ENCODE measurements at regions of chr12 and their contacts with region 1.

Region 1: DNA sequence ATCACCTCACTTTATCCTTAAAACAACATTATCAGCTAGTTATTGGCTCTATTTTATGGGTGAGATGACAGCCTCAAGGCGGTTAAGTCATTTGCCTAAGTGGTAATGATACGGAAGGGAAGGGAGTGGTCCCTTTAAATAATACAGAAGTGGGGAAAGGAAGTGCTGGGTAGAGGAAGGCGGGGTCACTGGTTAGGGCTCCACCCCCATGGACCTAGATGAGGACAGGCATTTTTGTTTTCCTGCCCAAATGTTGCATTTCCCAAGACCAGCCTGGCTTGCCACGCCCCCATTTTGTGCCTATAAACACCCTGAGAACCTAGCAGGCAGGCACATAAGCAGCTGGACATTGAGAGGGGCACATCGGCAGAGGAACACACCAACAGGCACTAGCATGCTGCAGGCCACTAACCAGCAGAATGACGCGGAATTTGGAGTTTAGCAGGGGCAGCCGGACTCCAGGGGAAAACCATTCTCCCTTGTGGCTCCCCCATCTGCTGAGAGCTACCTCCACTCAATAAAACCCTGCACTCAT is 100.9 kb downstream of the EPS8 start:
- DNase-seq: no peak
- H3K4me3 ChIP-seq: no peak overlapping the region
- H3K27ac ChIP-seq: no peak overlapping the region
- H3K4me1 ChIP-seq: no peaks in the 10 kb centered on the region
- H3K27me3 ChIP-seq: no peaks in the 10 kb centered on the region
- CTCF ChIP-seq: no peak
- POLR2A ChIP-seq: no peak

Region 2: DNA sequence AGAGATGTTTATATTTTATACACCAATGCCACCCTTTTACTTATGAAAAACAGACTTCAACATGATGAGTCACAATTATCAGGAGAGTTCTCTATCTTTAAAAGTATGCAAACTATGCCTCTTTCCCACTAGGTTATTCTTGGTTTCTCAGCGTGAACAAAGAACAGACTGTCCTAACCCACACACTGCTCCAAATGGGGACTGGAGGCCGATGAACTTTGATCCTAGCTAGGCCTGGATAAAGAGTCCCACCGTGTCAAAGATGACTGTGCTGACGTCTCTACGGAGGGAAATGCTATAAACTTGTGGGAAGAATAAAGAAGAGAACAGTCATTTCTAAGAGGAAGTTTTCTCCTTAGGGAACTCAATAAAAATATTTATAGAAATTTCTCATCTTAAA is 59.2 kb before region 1 on chr12:
- intact Hi-C with region 1: loop called (anchors 10 kb)
- DNase-seq: peak; percentile 7
- H3K4me3 ChIP-seq: no peak overlapping the region
- H3K27ac ChIP-seq: peak overlapping the region; percentile 64 to 67
- H3K4me1 ChIP-seq: no peaks in the 10 kb centered on the region
- H3K27me3 ChIP-seq: no peaks in the 10 kb centered on the region
- CTCF ChIP-seq: no peak
- POLR2A ChIP-seq: no peak

Measured in prostate gland (tissue), 2 donors.